Activated CD8-positive, alpha-beta T cell treated with anti-CD3 and anti-CD28 coated beads for 36 hours (primary cell): ENCODE measurements at regions of chr2 and their contacts with region 1.

Region 1: DNA sequence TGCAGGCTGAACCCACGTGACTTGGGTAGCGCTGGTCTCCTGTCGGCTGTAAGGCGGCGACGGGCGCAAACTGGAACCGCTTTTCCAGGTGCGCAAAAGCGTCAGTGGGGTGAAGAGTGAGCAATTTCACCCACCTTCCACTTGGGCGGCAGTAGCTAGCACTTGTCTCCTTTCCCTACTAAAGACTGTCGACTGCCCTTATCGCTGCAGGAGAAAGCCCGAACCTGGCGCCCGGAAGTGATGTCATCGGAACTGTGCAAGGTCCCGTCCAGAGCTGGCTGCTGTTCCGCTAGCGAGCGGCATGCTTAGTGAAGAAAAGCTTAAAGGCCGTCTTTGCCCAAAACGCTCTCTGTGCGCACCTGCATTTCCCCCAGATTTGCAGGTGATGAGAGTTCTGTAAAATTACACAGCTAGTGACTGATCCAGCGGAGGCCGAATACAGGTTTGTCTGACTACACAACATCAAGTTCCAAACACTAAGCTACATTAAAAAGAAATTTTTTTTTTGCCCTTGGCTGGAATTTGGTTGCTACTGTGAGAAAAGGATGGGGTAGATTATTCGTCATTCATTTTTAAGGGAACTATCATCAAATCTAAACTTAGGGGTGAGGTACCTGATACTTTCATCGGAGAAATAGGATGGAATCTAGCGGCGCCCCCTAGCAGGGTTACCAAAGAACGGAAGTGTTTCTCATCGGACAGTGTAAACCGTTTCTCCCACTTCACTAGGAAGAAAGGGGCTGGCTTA is at the start of gene OSGEPL1:
- DNase-seq: peak; percentile 97
- ATAC-seq: peak; percentile 95
- H3K4me3 Mint-ChIP-seq: peak within 1 kb of the TSS; percentile 97
- H3K27ac Mint-ChIP-seq: peak within 1 kb of the TSS; percentile 99
- H3K4me1 Mint-ChIP-seq: peaks cover 12% of the 10 kb centered on the region
- H3K27me3 Mint-ChIP-seq: no peaks in the 10 kb centered on the region
- CTCF ChIP-seq: peak; percentile 51
- total RNA-seq, gene OSGEPL1: 14.7 to 16.2 TPM

Region 2: GRCh38 chr2:189674374-189675112 is 88.2 kb before region 1 on chr2 and contains the start of gene ANKAR:
- CTCF ChIA-PET with region 1: interaction called, 18 read pairs
- POLR2A ChIA-PET with region 1: interaction called, 3 read pairs
- intact Hi-C with region 1: no loop called
- DNase-seq: peak; percentile 82
- ATAC-seq: peak; percentile 93
- H3K4me3 Mint-ChIP-seq: peak within 1 kb of the TSS; percentile 89
- H3K27ac Mint-ChIP-seq: peak within 1 kb of the TSS; percentile 96
- H3K4me1 Mint-ChIP-seq: peaks cover 28% of the 10 kb centered on the region
- H3K27me3 Mint-ChIP-seq: no peaks in the 10 kb centered on the region
- CTCF ChIP-seq: peak; percentile 76
- total RNA-seq, gene ANKAR: 3.5 to 3.6 TPM

Region 3: GRCh38 chr2:189751080-189751658 is 11.6 kb before region 1 on chr2:
- CTCF ChIA-PET with region 1: interaction called, 25 read pairs
- POLR2A ChIA-PET with region 1: interaction called, 4 read pairs
- intact Hi-C with region 1: no loop called
- DNase-seq: peak; percentile 58
- ATAC-seq: peak; percentile 86
- H3K4me3 Mint-ChIP-seq: no peak overlapping the region
- H3K27ac Mint-ChIP-seq: no peak overlapping the region
- H3K4me1 Mint-ChIP-seq: no peaks in the 10 kb centered on the region
- H3K27me3 Mint-ChIP-seq: no peaks in the 10 kb centered on the region
- CTCF ChIP-seq: peak; percentile 65

Region 4: GRCh38 chr2:189783927-189784867 is 21.5 kb after region 1 on chr2 and contains the starts of genes ORMDL1 and PMS1:
- CTCF ChIA-PET with region 1: interaction called, 23 read pairs
- POLR2A ChIA-PET with region 1: interaction called, 18 read pairs
- intact Hi-C with region 1: loop called (anchors 2 kb)
- DNase-seq: peak; percentile 95
- ATAC-seq: peak; percentile 92
- H3K4me3 Mint-ChIP-seq: peak within 1 kb of the TSS; percentile 97
- H3K27ac Mint-ChIP-seq: peak within 1 kb of the TSS; percentile 97
- H3K4me1 Mint-ChIP-seq: peaks cover 49% of the 10 kb centered on the region
- H3K27me3 Mint-ChIP-seq: no peaks in the 10 kb centered on the region
- CTCF ChIP-seq: no peak
- total RNA-seq, gene ORMDL1: 48.2 to 53.7 TPM
- total RNA-seq, gene PMS1: 44.3 to 58.5 TPM